Activated CD8-positive, alpha-beta T cell treated with anti-CD3 and anti-CD28 coated beads for 36 hours (primary cell): ENCODE measurements at regions of chr3 and their contacts with region 1.

Region 1: GRCh38 chr3:158845765-158846350 is 44.0 kb downstream of the MFSD1 start:
- DNase-seq: peak; percentile 48
- ATAC-seq: peak; percentile 75
- H3K4me3 Mint-ChIP-seq: no peak overlapping the region
- H3K27ac Mint-ChIP-seq: no peak overlapping the region
- H3K4me1 Mint-ChIP-seq: peaks cover 6% of the 10 kb centered on the region
- H3K27me3 Mint-ChIP-seq: no peaks in the 10 kb centered on the region
- CTCF ChIP-seq: peak; percentile 74

Region 2: GRCh38 chr3:158835631-158836030 is 10.2 kb before region 1 on chr3:
- CTCF ChIA-PET with region 1: no interaction called
- POLR2A ChIA-PET with region 1: no interaction called
- intact Hi-C with region 1: no loop called
- DNase-seq: no peak
- ATAC-seq: no peak
- H3K4me3 Mint-ChIP-seq: no peak overlapping the region
- H3K27ac Mint-ChIP-seq: no peak overlapping the region
- H3K4me1 Mint-ChIP-seq: no peaks in the 10 kb centered on the region
- H3K27me3 Mint-ChIP-seq: no peaks in the 10 kb centered on the region
- CTCF ChIP-seq: no peak

Region 3: GRCh38 chr3:159252772-159253384 is 407.0 kb after region 1 on chr3:
- CTCF ChIA-PET with region 1: interaction called, 106 read pairs
- POLR2A ChIA-PET with region 1: no interaction called
- intact Hi-C with region 1: no loop called
- DNase-seq: no peak
- ATAC-seq: no peak
- H3K4me3 Mint-ChIP-seq: no peak overlapping the region
- H3K27ac Mint-ChIP-seq: no peak overlapping the region
- H3K4me1 Mint-ChIP-seq: no peaks in the 10 kb centered on the region
- H3K27me3 Mint-ChIP-seq: peaks cover 7% of the 10 kb centered on the region
- CTCF ChIP-seq: peak; percentile 59

Region 4: GRCh38 chr3:159260049-159260662 is 414.3 kb after region 1 on chr3:
- CTCF ChIA-PET with region 1: interaction called, 106 read pairs
- POLR2A ChIA-PET with region 1: no interaction called
- intact Hi-C with region 1: loop called (anchors 1 kb)
- DNase-seq: peak; percentile 61
- ATAC-seq: no peak
- H3K4me3 Mint-ChIP-seq: no peak overlapping the region
- H3K27ac Mint-ChIP-seq: no peak overlapping the region
- H3K4me1 Mint-ChIP-seq: no peaks in the 10 kb centered on the region
- H3K27me3 Mint-ChIP-seq: peaks cover 6% of the 10 kb centered on the region
- CTCF ChIP-seq: peak; percentile 65